Psoas muscle (tissue), 8 donors: ENCODE measurements at regions of chr2 and their contacts with region 1.

Region 1: DNA sequence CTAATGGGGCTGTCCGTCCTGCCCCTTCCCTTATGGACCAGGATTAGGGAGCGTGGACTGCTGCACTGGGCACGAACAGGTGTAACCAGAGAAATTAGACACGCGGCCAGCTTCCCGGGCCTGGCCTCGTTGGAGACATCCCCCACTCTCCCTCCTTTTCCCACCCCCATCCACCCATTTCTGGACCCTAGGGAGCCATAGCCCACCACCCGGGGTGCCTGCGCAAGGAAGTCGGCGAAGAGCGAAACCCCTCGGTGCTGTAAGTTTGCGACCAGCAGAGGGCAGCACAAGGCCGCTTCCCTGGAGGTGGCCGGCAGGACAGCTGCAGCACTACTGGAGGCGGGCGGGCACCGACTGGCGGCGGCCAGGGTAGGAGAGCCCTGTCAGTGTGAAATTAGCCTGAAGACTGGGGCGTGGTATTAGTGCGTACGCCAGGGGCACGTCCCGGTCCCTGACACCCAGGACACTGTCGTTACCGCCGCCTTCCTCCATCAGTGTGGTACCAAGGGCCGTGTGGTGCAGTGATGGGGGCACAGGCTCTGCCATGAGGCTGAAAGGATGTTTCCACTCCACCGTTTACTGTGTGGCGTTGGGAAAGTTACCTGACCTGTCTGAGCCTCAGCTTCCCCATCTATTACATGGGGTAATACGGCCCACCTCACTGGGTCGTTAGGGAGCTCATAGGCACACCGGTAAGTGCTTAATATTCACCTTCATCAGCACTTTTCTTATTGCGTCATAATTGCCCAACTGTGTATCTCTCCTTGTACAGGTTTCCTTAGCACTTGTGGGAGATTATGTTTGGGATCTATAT is 36.0 kb upstream of the CD207 start:
- DNase-seq: peak; percentile 84 to 94
- ATAC-seq: peak; percentile 97 to 100 (median 99)
- H3K4me3 ChIP-seq: peak overlapping the region; percentile 54
- H3K27ac ChIP-seq: no peak overlapping the region
- H3K4me1 ChIP-seq: peaks cover 7% of the 10 kb centered on the region
- H3K27me3 ChIP-seq: peaks cover 0 to 28% (median 7%) of the 10 kb centered on the region in 3 donors
- CTCF ChIP-seq: peak; percentile 89

Region 2: GRCh38 chr2:70671092-70671675 is 200.4 kb before region 1 on chr2:
- intact Hi-C with region 1: no loop called
- DNase-seq: no peak
- ATAC-seq: no peak
- H3K4me3 ChIP-seq: no peak overlapping the region
- H3K27ac ChIP-seq: no peak overlapping the region
- H3K4me1 ChIP-seq: no peaks in the 10 kb centered on the region
- H3K27me3 ChIP-seq: peaks cover 0 to 3% (median 3%) of the 10 kb centered on the region in 3 donors
- CTCF ChIP-seq: no peak

Region 3: GRCh38 chr2:70789304-70790135 is 82.1 kb before region 1 on chr2:
- intact Hi-C with region 1: loop called in 1 of 2 experiments (anchors 2 kb)
- DNase-seq: peak; percentile 31 to 64
- ATAC-seq: peak; percentile 59 to 84 (median 66)
- H3K4me3 ChIP-seq: peak overlapping the region; percentile 53
- H3K27ac ChIP-seq: no peak overlapping the region
- H3K4me1 ChIP-seq: peaks cover 3% of the 10 kb centered on the region
- H3K27me3 ChIP-seq: peaks cover 2 to 64% (median 9%) of the 10 kb centered on the region in 3 donors
- CTCF ChIP-seq: peak; percentile 60

Region 4: DNA sequence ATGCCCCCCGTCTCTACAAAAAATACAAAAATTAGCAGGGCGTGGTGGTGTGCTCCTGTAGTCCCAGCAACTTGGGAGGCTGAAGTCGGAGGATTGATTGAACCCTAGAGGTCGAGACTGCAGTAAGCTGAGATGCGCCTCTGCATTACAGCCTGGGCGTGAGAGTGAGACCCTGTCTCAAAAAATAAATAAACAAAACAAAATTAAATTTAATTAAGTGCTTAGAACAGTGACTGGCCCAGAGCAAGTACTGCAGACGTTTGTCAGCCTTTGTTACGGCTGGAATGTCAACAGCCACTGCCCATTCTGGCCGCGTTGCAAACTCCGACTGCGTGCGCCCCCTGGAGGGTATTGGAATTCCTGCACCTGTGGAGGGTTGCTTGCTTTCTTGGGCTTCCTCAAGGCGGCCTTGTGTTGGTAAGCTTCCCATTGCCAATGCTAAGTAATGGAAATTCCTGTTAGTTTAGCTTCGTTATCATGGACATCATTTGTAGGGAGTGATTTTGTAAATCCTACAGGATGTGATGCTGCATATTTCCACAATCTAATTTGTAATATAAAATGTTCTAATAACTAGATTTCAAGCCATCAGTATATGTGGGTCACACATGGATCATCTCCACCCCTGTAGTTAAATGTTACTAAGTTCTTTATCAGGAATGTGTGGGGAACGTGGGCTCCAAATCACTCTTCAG is 48.2 kb after region 1 on chr2:
- intact Hi-C with region 1: loop called (anchors 2 kb)
- DNase-seq: peak; percentile 75 to 84
- ATAC-seq: peak; percentile 87 to 94 (median 92)
- H3K4me3 ChIP-seq: no peak overlapping the region
- H3K27ac ChIP-seq: no peak overlapping the region
- H3K4me1 ChIP-seq: no peaks in the 10 kb centered on the region
- H3K27me3 ChIP-seq: no peaks in the 10 kb centered on the region
- CTCF ChIP-seq: peak; percentile 80